ENCODE measurements at regions of chrX and their contacts with region 1.

Region 1: GRCh38 chrX:154515878-154516655 is at the start of gene FAM3A:
- DNase-seq: peak; percentile 97
- ATAC-seq: peak; percentile 98
- H3K4me3 Mint-ChIP-seq: peak within 1 kb of the TSS; percentile 81
- H3K27ac Mint-ChIP-seq: peak within 1 kb of the TSS; percentile 90
- H3K4me1 Mint-ChIP-seq: peaks cover 30% of the 10 kb centered on the region
- H3K27me3 Mint-ChIP-seq: no peaks in the 10 kb centered on the region
- total RNA-seq, gene FAM3A: 27.6 to 30.5 TPM

Region 2: GRCh38 chrX:154097597-154098541 is 418.2 kb before region 1 on chrX and contains the start of gene MECP2:
- CTCF ChIA-PET with region 1: no interaction called
- POLR2A ChIA-PET with region 1: no interaction called
- intact Hi-C with region 1: loop called in 1 of 2 experiments (anchors 1 kb)
- DNase-seq: peak; percentile 93
- ATAC-seq: peak; percentile 87
- H3K4me3 Mint-ChIP-seq: peak within 1 kb of the TSS; percentile 81
- H3K27ac Mint-ChIP-seq: peak within 1 kb of the TSS; percentile 96
- H3K4me1 Mint-ChIP-seq: peaks cover 56% of the 10 kb centered on the region
- H3K27me3 Mint-ChIP-seq: peaks cover 2% of the 10 kb centered on the region
- total RNA-seq, gene MECP2: 50.7 to 60.0 TPM

Region 3: GRCh38 chrX:154397819-154398724 is 118.0 kb before region 1 on chrX and contains the start of gene RPL10:
- CTCF ChIA-PET with region 1: no interaction called
- POLR2A ChIA-PET with region 1: no interaction called
- intact Hi-C with region 1: loop called in 1 of 2 experiments (anchors 1 kb)
- DNase-seq: peak; percentile 94
- ATAC-seq: peak; percentile 80
- H3K4me3 Mint-ChIP-seq: peak within 1 kb of the TSS; percentile 99
- H3K27ac Mint-ChIP-seq: peak within 1 kb of the TSS; percentile 100
- H3K4me1 Mint-ChIP-seq: no peaks in the 10 kb centered on the region
- H3K27me3 Mint-ChIP-seq: no peaks in the 10 kb centered on the region
- total RNA-seq, gene RPL10: 1,286 to 2,705 TPM

Region 4: GRCh38 chrX:154436983-154437719 is 78.9 kb before region 1 on chrX and contains the start of gene GDI1:
- CTCF ChIA-PET with region 1: no interaction called
- POLR2A ChIA-PET with region 1: no interaction called
- intact Hi-C with region 1: loop called in 1 of 2 experiments (anchors 2 kb)
- DNase-seq: peak; percentile 69
- ATAC-seq: peak; percentile 40
- H3K4me3 Mint-ChIP-seq: peak within 1 kb of the TSS; percentile 83
- H3K27ac Mint-ChIP-seq: peak within 1 kb of the TSS; percentile 87
- H3K4me1 Mint-ChIP-seq: peaks cover 22% of the 10 kb centered on the region
- H3K27me3 Mint-ChIP-seq: no peaks in the 10 kb centered on the region
- total RNA-seq, gene GDI1: 100 to 117 TPM

Region 5: GRCh38 chrX:154478728-154479622 is 37.1 kb before region 1 on chrX and contains the start of gene LAGE3:
- CTCF ChIA-PET with region 1: no interaction called
- POLR2A ChIA-PET with region 1: no interaction called
- intact Hi-C with region 1: loop called (anchors 1 kb)
- DNase-seq: peak; percentile 97
- ATAC-seq: peak; percentile 96
- H3K4me3 Mint-ChIP-seq: peak within 1 kb of the TSS; percentile 80
- H3K27ac Mint-ChIP-seq: peak within 1 kb of the TSS; percentile 90
- H3K4me1 Mint-ChIP-seq: peaks cover 24% of the 10 kb centered on the region
- H3K27me3 Mint-ChIP-seq: no peaks in the 10 kb centered on the region
- total RNA-seq, gene LAGE3: 34.7 to 43.0 TPM

Region 6: DNA sequence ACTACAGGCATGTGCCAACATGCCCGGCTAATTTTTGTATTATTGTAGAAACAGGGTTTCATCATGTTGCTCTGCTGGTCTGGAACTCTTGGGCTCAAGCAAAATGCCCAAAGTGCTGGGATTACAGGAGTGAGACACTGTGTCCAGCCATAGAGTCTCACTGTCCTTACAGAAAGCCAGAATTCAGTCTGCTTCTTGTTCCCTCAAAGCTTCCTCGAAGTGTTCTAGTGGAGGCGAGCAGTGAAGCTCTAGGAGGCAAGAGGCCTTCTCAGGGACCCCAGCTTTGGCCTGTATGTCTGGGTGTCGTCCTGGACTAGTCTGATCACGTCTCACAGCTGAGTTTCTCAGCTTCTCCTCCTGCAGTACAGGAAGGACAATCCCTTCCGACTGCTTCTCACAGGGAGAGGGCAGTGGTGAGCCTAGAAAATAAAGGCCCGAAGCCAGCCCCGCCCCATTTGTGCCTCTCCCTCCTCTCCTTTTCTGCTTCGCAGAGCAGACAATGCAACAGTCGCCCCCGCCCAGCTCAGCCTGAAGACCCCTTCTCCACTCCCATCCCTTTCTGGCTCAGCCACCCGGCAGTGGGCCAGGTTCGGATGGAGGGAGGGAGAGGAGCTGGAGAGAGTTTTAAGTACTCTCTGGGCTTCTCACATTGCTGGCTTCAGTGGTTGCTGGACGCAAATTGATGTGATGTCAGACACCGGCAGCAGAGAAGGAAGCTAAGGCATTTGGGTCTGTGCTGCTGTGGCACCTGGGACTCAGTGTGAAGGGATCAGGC is 11.0 kb after region 1 on chrX:
- CTCF ChIA-PET with region 1: interaction called, 5 read pairs
- POLR2A ChIA-PET with region 1: no interaction called
- intact Hi-C with region 1: loop called in 1 of 2 experiments (anchors 1 kb)
- DNase-seq: peak; percentile 81
- ATAC-seq: peak; percentile 98
- H3K4me3 Mint-ChIP-seq: no peak overlapping the region
- H3K27ac Mint-ChIP-seq: no peak overlapping the region
- H3K4me1 Mint-ChIP-seq: peaks cover 18% of the 10 kb centered on the region
- H3K27me3 Mint-ChIP-seq: no peaks in the 10 kb centered on the region

Region 7: DNA sequence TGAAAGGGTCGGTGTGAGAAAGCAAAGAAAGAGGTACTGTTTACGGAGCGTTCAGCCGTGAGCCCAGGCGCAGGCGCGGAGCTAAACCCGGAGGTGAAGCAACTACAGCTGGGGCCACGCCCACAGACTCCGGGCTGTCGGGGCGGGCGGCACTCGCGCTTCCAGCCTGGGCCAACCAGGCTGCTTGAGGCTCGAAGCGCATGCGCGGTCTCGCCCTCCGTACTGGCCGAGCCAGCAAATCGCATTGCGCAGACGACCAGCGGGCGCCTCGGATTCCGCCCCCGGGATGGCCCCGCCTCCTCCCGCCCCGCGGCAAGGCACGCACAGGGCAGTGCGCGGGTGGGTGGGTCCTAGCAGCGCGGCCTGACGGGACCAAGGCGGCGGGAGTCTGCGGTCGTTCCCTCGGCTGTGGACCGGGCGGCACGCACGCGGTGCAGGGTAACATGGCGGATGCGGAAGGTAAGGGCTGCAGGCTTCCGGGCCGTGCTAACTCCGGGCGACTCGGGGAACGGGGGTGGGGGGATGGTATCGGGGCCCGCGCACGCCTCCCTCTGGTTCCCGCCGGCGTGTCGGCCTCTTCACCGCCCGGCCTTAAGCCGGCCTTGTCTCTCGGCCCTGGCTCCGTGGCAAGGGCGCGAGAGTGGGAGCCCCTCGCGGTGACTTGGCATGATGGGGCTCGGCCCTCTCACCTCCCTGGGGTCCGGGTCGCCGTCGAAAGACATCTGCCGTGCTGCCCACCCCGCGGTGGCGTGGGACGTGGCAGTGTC is 246.6 kb after region 1 on chrX and contains the start of gene DKC1:
- CTCF ChIA-PET with region 1: no interaction called
- POLR2A ChIA-PET with region 1: no interaction called
- intact Hi-C with region 1: loop called in 1 of 2 experiments (anchors 1 kb)
- DNase-seq: peak; percentile 97
- ATAC-seq: peak; percentile 90
- H3K4me3 Mint-ChIP-seq: peak within 1 kb of the TSS; percentile 85
- H3K27ac Mint-ChIP-seq: peak within 1 kb of the TSS; percentile 92
- H3K4me1 Mint-ChIP-seq: peaks cover 33% of the 10 kb centered on the region
- H3K27me3 Mint-ChIP-seq: no peaks in the 10 kb centered on the region
- total RNA-seq, gene DKC1: 126 to 130 TPM

Region 8: DNA sequence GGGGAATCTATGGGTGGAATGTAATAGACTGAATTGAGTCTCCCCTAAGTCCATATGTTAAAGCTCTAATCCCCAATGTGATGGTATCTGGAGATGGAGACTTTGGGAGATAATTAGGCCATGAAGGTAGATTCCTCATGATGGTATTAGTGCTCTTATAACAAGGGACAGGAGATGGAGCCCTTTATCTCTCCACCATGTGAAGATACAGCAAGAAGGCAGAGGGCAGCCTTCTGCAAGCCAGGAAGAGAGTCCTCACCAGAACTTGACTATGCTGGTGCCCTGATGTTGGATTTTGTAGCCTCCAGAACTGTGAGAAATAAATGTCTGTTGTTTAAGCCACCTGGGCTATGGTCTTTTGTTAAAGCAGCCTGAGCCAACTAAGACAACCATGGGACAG is 1018.7 kb after region 1 on chrX:
- CTCF ChIA-PET with region 1: no interaction called
- POLR2A ChIA-PET with region 1: no interaction called
- intact Hi-C with region 1: no loop called
- DNase-seq: no peak
- ATAC-seq: no peak
- H3K4me3 Mint-ChIP-seq: no peak overlapping the region
- H3K27ac Mint-ChIP-seq: no peak overlapping the region
- H3K4me1 Mint-ChIP-seq: no peaks in the 10 kb centered on the region
- H3K27me3 Mint-ChIP-seq: no peaks in the 10 kb centered on the region